AG04450 (cell line): ENCODE measurements at regions of chr10 and their contacts with region 1.

Region 1: GRCh38 chr10:93471110-93471651 is 11.0 kb downstream of the MYOF start:
- DNase-seq: peak; percentile 88
- H3K4me3 ChIP-seq: no peak overlapping the region
- H3K27ac ChIP-seq: peak overlapping the region; percentile 99
- H3K27me3 ChIP-seq: no peaks in the 10 kb centered on the region
- CTCF ChIP-seq: no peak

Region 2: GRCh38 chr10:93293999-93294398 is 177.2 kb before region 1 on chr10:
- CTCF ChIA-PET with region 1: no interaction called
- POLR2A ChIA-PET with region 1: interaction called, 12 read pairs
- DNase-seq: no peak
- H3K4me3 ChIP-seq: no peak overlapping the region
- H3K27ac ChIP-seq: no peak overlapping the region
- H3K27me3 ChIP-seq: no peaks in the 10 kb centered on the region
- CTCF ChIP-seq: no peak

Region 3: DNA sequence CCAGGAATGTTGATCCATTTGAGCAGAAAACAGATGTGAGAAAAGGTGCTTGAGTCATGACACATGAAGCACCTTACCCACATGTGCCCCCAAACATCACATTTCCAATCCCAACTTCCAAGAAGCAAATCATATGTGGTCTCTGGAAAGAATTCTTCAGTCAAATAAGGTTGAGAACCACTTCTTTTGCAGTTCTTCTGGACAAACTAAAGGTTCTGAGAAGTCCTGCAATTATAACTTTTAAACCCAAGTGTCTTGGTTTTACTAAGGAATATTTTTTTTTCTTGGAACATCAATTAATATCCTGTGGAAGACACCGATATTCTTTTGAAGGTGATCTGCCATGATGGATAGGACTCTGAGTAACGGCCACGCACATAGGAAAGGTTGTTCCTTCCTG is 140.4 kb before region 1 on chr10:
- CTCF ChIA-PET with region 1: no interaction called
- POLR2A ChIA-PET with region 1: no interaction called
- DNase-seq: no peak
- H3K4me3 ChIP-seq: no peak overlapping the region
- H3K27ac ChIP-seq: no peak overlapping the region
- H3K27me3 ChIP-seq: no peaks in the 10 kb centered on the region
- CTCF ChIP-seq: no peak

Region 4: GRCh38 chr10:93386631-93387369 is 84.4 kb before region 1 on chr10:
- CTCF ChIA-PET with region 1: no interaction called
- POLR2A ChIA-PET with region 1: interaction called, 10 read pairs
- DNase-seq: no peak
- H3K4me3 ChIP-seq: no peak overlapping the region
- H3K27ac ChIP-seq: peak overlapping the region; percentile 47
- H3K27me3 ChIP-seq: no peaks in the 10 kb centered on the region
- CTCF ChIP-seq: no peak

Region 5: DNA sequence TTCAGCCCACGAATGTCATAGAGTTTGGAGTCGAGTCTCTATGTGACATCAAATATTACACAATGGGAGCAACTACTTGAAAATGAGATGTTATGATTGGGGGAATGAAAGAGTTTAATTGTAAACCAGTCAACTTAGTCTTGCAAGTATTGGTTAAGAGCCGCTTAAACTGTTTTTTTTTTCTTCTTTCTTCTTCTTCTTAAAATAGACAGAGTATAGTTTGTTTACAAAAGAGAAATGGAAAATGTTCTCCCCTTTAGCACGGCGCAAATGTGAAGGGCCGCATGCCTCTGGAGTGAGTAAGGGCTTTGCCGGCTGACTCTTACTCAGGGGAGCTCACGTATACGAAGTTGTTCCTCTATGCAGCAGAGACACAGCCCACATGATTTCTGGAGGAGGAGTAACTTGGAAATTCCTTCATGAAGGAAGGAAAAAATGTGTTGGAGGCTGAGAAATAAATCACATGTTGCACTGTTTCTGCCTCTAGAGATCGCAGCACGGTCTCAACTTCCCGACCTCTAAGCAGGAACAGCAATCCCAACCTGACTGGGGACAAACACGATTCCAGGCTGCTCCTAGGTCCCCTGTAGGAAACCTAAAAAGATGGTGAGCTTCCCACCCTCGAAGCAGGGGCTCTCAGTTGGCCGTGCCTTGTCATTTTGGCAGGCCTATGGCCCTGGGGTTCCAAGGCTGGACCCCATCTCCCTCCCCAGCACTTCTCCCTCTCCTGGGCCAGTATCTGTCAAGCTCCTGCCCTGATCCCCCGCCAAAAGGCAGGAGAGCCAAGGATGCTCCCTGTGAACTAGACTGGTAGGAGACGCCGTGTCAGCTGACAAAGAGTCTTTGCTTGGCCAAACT is 33.9 kb before region 1 on chr10:
- CTCF ChIA-PET with region 1: interaction called, 5 read pairs
- POLR2A ChIA-PET with region 1: interaction called, 16 read pairs
- DNase-seq: peak; percentile 98
- H3K4me3 ChIP-seq: peak overlapping the region; percentile 45
- H3K27ac ChIP-seq: peak overlapping the region; percentile 100
- H3K27me3 ChIP-seq: no peaks in the 10 kb centered on the region
- CTCF ChIP-seq: no peak

Region 6: GRCh38 chr10:93458821-93459257 is 12.3 kb before region 1 on chr10:
- CTCF ChIA-PET with region 1: interaction called, 9 read pairs
- POLR2A ChIA-PET with region 1: interaction called, 35 read pairs
- DNase-seq: peak; percentile 100
- H3K4me3 ChIP-seq: peak overlapping the region; percentile 41
- H3K27ac ChIP-seq: peak overlapping the region; percentile 99
- H3K27me3 ChIP-seq: no peaks in the 10 kb centered on the region
- CTCF ChIP-seq: no peak